ENCODE measurements at regions of chr19 and their contacts with region 1.

Region 1: GRCh38 chr19:43519436-43520088 is 7.4 kb downstream of the ETHE1 start:
- DNase-seq: peak; percentile 73
- H3K4me3 ChIP-seq: peak overlapping the region in 1 of 2 experiments; percentile 18; a peak in 1 of 4 replicates
- H3K27ac ChIP-seq: no peak overlapping the region
- H3K4me1 ChIP-seq: no peaks in the 10 kb centered on the region; a peak in 1 of 4 replicates
- H3K27me3 ChIP-seq: no peaks in the 10 kb centered on the region
- CTCF ChIP-seq: peak; percentile 93
- EP300 ChIP-seq: no peak
- RAD21 ChIP-seq: peak; percentile 97

Region 2: GRCh38 chr19:43463381-43464136 is 56.0 kb before region 1 on chr19:
- CTCF ChIA-PET with region 1: interaction called, 14 read pairs
- POLR2A ChIA-PET with region 1: interaction called, 3 read pairs
- DNase-seq: peak; percentile 98
- H3K4me3 ChIP-seq: peak overlapping the region; percentile 65 to 88
- H3K27ac ChIP-seq: peak overlapping the region; percentile 61 to 67; a peak in 3 of 4 replicates
- H3K4me1 ChIP-seq: peaks cover 0 to 10% of the 10 kb centered on the region in 2 experiments; a peak in 1 of 4 replicates
- H3K27me3 ChIP-seq: no peaks in the 10 kb centered on the region
- CTCF ChIP-seq: no peak
- EP300 ChIP-seq: no peak
- RAD21 ChIP-seq: no peak

Region 3: DNA sequence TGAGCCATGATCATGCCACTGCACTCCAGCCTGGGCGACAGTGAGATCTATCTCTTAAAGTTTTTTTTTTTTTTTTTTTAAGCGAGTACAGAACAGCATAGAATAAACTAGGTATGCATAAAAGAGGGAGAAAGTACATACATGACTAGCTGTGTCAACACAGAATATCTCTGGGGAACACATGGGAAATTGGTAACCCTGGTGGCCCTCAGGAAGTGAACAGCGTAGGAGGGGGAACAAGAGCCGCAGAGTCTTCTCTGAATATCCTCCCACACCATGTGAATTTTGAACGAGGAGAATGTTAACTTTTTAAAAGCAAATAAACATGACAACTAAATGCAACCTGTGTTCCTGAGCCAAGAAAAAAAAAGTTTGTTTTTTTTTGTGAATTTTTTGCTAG is 30.3 kb before region 1 on chr19:
- CTCF ChIA-PET with region 1: interaction called, 10 read pairs
- POLR2A ChIA-PET with region 1: no interaction called
- DNase-seq: no peak
- H3K4me3 ChIP-seq: no peak overlapping the region
- H3K27ac ChIP-seq: no peak overlapping the region
- H3K4me1 ChIP-seq: no peaks in the 10 kb centered on the region
- H3K27me3 ChIP-seq: no peaks in the 10 kb centered on the region
- CTCF ChIP-seq: no peak
- EP300 ChIP-seq: no peak
- RAD21 ChIP-seq: no peak

Region 4: DNA sequence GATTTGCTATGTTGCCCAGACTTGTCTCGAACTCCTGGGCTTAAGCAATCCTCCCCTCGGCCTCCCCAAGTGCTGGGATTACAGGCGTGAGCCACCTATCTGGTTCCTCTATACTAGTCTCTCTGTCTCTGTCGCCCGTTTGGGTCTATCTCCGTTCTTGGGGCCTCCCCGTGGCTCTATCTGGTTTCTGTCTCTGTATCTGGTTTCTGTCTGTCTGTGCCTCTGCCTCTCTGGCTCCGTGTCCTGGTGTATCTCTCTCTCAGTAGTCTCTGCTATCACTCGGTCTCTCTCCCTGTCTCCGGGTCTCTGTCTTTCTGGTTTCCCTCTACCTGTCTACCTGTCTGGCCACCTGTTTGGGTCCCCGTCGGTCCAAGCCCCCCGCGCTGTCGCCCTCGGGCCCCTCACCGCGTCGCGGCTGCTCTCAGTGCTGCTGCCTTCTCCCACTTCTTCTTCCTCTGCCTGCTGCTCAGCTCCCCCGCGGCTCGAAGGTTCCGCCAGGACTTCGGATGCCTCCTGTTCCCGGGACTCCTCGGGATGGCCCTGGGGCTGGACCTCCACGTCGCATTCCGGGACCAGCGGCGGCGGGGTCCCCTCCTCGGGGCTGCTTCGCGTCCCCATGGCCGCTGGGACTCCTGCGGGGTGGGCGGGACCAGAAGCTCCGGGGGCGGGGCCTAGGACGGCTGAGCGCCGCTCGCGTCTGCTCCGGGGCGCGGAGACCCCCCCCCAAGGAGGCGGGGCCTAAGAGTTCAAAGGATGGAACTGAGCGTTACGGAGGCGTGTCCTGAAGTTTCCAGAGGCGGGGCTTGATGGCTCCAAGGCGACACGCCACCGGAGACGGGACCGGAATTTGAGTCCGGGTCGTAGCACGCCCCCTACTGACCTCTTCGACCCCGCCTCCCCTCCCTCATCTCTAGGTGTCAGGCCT is 15.8 kb before region 1 on chr19:
- CTCF ChIA-PET with region 1: interaction called, 42 read pairs
- POLR2A ChIA-PET with region 1: no interaction called
- DNase-seq: peak; percentile 99
- H3K4me3 ChIP-seq: peak overlapping the region; percentile 64 to 98
- H3K27ac ChIP-seq: peak overlapping the region; percentile 68
- H3K4me1 ChIP-seq: peaks cover 3 to 4% of the 10 kb centered on the region in 2 experiments; a peak in 1 of 4 replicates
- H3K27me3 ChIP-seq: no peaks in the 10 kb centered on the region
- CTCF ChIP-seq: no peak
- EP300 ChIP-seq: no peak; a peak in 1 of 4 replicates
- RAD21 ChIP-seq: peak; percentile 37

Region 5: DNA sequence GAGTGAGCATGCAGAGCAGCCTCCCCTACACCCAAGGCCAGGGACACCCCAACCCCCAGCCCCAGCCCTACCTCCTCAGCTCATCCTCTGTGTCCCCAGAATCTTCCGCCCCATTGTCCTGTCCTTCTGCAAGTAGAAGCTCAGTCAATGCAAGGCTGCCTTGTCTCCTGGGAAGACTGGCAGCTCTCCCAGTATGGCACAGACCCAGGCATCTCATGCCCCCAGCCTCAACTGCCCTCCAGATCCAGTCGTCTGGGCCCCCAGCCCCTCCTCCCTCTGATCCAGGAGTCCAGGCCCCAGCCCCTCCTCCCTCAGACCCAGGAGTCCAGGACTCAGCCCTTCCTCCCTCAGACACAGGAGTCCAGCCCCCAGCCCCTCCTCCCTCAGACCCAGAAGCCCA is 26.4 kb after region 1 on chr19:
- CTCF ChIA-PET with region 1: no interaction called
- POLR2A ChIA-PET with region 1: no interaction called
- DNase-seq: no peak
- H3K4me3 ChIP-seq: no peak overlapping the region
- H3K27ac ChIP-seq: no peak overlapping the region
- H3K4me1 ChIP-seq: no peaks in the 10 kb centered on the region
- H3K27me3 ChIP-seq: no peaks in the 10 kb centered on the region
- CTCF ChIP-seq: no peak
- EP300 ChIP-seq: no peak
- RAD21 ChIP-seq: no peak

Region 6: DNA sequence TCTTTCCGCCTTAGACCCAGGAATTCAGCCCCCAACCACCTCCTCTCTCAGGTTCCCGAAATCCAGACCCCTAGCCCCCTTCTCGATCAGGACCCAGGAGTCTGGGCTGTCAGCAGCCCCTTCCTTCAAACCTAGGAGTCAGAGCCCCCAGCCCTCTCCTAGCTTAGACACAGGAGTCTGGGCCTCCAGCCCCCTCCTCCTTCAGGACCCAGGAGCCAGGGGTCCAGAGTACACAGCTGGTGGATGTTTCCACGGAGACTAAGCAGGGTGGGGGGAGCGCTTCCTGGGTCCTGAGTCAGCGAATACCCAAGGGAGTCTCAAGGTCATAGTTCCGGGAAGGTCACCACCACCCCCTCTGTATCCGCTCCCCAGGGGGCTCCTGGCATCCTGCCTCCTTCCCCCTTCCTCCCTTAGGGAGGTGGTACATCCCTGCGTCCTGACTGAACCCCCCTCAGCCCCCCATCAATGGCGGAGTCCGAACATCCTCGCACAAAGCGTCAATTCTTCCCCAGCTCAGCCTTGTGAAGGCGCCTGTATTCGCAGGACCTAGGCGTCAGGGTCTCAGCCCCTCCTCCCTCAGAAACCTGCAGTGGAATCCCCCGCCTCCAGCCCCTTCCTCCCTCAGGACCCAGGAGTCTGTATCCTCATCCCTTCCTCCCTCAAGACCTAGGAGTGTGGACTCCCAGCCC is 115.5 kb after region 1 on chr19:
- CTCF ChIA-PET with region 1: no interaction called
- POLR2A ChIA-PET with region 1: no interaction called
- DNase-seq: no peak
- H3K4me3 ChIP-seq: no peak overlapping the region
- H3K27ac ChIP-seq: no peak overlapping the region
- H3K4me1 ChIP-seq: peaks cover 0 to 8% of the 10 kb centered on the region in 2 experiments; a peak in 1 of 4 replicates
- H3K27me3 ChIP-seq: no peaks in the 10 kb centered on the region; the same call in 1 of the 2 replicates
- CTCF ChIP-seq: no peak
- EP300 ChIP-seq: no peak
- RAD21 ChIP-seq: no peak

Measured in SK-N-SH (cell line).